Activated CD8-positive, alpha-beta T cell treated with anti-CD3 and anti-CD28 coated beads for 36 hours (primary cell): ENCODE measurements at regions of chr10 and their contacts with region 1.

Region 1: GRCh38 chr10:100267237-100268104 is at the start of gene CWF19L1:
- DNase-seq: peak; percentile 85
- ATAC-seq: peak; percentile 90
- H3K4me3 Mint-ChIP-seq: peak within 1 kb of the TSS; percentile 99
- H3K27ac Mint-ChIP-seq: peak within 1 kb of the TSS; percentile 100
- H3K4me1 Mint-ChIP-seq: peaks cover 18% of the 10 kb centered on the region
- H3K27me3 Mint-ChIP-seq: no peaks in the 10 kb centered on the region
- CTCF ChIP-seq: no peak
- total RNA-seq, gene CWF19L1: 38.5 to 43.3 TPM

Region 2: DNA sequence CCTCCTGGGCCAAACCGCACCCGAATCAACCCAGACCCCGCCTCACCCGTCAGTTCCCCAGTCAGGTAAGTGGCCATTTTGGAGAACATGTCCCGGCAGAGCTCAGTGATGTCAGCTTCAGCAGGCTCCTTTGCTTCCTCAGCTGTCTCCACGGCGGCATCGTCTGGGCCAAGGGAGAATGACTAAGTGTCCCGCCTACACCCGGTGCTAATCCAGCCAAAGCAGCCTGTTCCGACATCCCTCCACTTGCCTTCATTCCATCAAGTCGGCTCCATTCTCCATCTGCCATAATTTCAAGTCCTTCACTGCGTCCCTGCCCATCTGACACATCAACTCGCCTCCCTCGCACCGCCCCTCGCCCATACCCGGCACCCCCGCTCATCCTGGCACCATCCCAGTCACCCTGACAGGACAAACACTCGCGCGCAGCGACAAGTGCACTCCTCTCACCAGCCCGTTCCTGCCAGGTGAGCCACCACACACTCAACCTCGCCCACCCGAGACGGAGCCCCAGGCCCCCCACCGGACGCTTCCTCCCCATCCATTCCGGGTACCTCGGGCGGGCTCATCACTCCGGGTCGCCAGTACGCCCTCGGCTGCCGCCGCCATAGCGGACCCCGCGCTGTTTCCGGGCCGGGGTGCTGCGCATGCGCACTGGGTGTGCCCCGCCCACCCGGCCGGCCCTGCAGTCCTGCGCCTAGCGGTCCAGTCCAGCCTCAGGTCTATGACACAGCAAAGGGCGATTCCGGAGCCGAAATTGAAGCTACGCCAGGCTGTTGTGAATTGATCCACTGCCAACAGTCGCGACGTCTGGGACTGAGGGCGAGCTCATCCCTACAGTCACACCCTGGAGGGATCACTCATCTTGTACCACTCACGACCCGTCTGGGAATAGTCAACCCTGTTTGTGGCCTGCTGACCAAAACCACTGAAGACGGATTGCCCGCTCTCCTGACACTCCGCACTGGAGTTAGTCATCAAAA is 18.9 kb after region 1 on chr10 and contains the start of gene BLOC1S2:
- CTCF ChIA-PET with region 1: interaction called, 5 read pairs
- POLR2A ChIA-PET with region 1: interaction called, 13 read pairs
- intact Hi-C with region 1: no loop called
- DNase-seq: peak; percentile 91
- ATAC-seq: peak; percentile 87
- H3K4me3 Mint-ChIP-seq: peak within 1 kb of the TSS; percentile 99
- H3K27ac Mint-ChIP-seq: peak within 1 kb of the TSS; percentile 99
- H3K4me1 Mint-ChIP-seq: peaks cover 22% of the 10 kb centered on the region
- H3K27me3 Mint-ChIP-seq: no peaks in the 10 kb centered on the region
- CTCF ChIP-seq: no peak
- total RNA-seq, gene BLOC1S2: 45.1 to 48.6 TPM